Vagina (tissue), 2 donors: ENCODE measurements at regions of chr10 and their contacts with region 1.

Region 1: DNA sequence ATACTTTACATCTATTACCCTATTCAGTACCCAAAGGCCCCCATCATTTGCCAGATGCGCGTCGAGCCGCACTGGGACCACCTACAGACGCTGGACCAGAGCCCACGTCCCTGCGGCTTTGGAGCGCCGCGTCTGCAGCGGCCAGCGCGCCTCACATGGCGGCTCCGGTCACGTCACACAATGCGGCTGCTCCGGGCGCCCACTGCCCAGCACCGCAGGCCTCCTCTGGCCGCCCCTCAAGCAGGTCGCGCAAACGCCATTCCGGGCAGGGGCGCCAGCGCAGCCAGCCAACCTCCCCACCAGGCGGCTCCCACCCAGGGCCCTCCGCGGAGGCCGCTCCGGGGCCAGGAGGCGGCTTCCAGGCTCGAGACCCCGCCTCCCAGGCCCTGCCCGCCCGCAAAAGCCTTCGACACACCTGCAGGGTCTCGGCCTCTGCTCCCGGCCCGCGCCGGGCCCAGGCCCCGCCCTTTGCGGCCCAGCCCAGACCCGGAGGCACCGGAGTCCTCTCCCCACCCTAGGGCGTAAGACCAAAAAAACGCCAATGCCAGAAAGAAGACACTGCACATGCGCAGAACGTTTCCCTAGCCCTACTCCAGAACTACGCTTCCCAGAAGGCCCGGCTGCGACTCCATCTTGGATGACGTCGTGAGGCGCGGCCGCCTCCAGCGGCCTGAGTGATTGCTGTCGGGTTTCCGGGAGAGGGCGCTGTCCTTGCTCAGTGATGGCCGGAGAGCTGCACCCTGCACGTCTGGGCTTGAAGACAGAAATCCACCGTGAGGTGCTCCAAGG is at the start of gene ZNF25:
- DNase-seq: peak; percentile 99
- H3K4me3 ChIP-seq: peak within 1 kb of the TSS; percentile 63 to 77
- H3K27ac ChIP-seq: peak within 1 kb of the TSS; percentile 96
- H3K4me1 ChIP-seq: peaks cover 12% of the 10 kb centered on the region
- H3K27me3 ChIP-seq: no peaks in the 10 kb centered on the region
- CTCF ChIP-seq: peak; percentile 51 to 91 (median 81)
- POLR2A ChIP-seq: peak in 1 of 2 donors; percentile 66
- total RNA-seq, gene ZNF25: 12.8 TPM

Region 2: GRCh38 chr10:38010119-38010903 is 34.0 kb after region 1 on chr10 and contains the start of gene ZNF33A:
- intact Hi-C with region 1: loop called (anchors 2 kb)
- DNase-seq: peak; percentile 96 to 97
- H3K4me3 ChIP-seq: peak within 1 kb of the TSS; percentile 79 to 80
- H3K27ac ChIP-seq: peak within 1 kb of the TSS; percentile 98
- H3K4me1 ChIP-seq: peaks cover 18% of the 10 kb centered on the region
- H3K27me3 ChIP-seq: no peaks in the 10 kb centered on the region
- CTCF ChIP-seq: peak in 1 of 3 experiments; percentile 6
- POLR2A ChIP-seq: peak in 1 of 2 donors; percentile 35
- total RNA-seq, gene ZNF33A: 18.9 TPM

Region 3: GRCh38 chr10:38094158-38094920 is 118.1 kb after region 1 on chr10 and contains the start of gene ZNF37A:
- intact Hi-C with region 1: loop called (anchors 10 kb)
- DNase-seq: peak in 1 of 2 donors; percentile 95
- H3K4me3 ChIP-seq: peak within 1 kb of the TSS; percentile 67 to 90
- H3K27ac ChIP-seq: peak within 1 kb of the TSS; percentile 87
- H3K4me1 ChIP-seq: peaks cover 22% of the 10 kb centered on the region
- H3K27me3 ChIP-seq: no peaks in the 10 kb centered on the region
- CTCF ChIP-seq: no peak
- POLR2A ChIP-seq: no peak
- total RNA-seq, gene ZNF37A: 14.5 TPM

Region 4: GRCh38 chr10:38209319-38209718 is 233.0 kb after region 1 on chr10:
- intact Hi-C with region 1: no loop called
- DNase-seq: no peak
- H3K4me3 ChIP-seq: no peak overlapping the region
- H3K27ac ChIP-seq: no peak overlapping the region
- H3K4me1 ChIP-seq: no peaks in the 10 kb centered on the region
- H3K27me3 ChIP-seq: no peaks in the 10 kb centered on the region
- CTCF ChIP-seq: no peak
- POLR2A ChIP-seq: no peak

Region 5: GRCh38 chr10:38226385-38226784 is 250.1 kb after region 1 on chr10:
- intact Hi-C with region 1: no loop called
- DNase-seq: no peak
- H3K4me3 ChIP-seq: no peak overlapping the region
- H3K27ac ChIP-seq: no peak overlapping the region
- H3K4me1 ChIP-seq: no peaks in the 10 kb centered on the region
- H3K27me3 ChIP-seq: no peaks in the 10 kb centered on the region
- CTCF ChIP-seq: no peak
- POLR2A ChIP-seq: no peak